HepG2 (cell line): ENCODE measurements at regions of chr5 and their contacts with region 1.

Region 1: DNA sequence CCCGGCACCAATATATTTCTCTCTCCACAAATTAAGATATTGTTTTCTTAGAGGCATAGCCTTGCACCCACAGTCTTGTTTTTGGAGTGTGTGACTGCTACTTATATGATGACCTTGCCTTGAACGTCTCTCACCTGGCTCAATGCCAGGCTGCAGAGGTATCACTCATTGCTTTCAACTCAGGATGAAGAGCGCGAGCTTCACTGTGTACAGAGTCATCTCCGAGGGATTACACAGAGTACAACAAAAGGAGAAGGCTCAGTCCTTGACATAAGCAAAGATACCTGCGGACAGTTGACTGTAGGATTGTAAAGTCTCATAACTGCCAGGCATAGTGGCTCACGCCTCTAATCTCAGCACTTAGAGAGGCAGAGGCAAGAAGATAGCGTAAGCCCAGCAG is 53.8 kb downstream of the CD180 start:
- DNase-seq: peak; percentile 65
- ATAC-seq: peak; percentile 52
- H3K4me3 ChIP-seq: no peak overlapping the region
- H3K27ac ChIP-seq: peak overlapping the region; percentile 86
- H3K4me1 ChIP-seq: peaks cover 64% of the 10 kb centered on the region
- H3K27me3 ChIP-seq: no peaks in the 10 kb centered on the region
- CTCF ChIP-seq: no peak
- EP300 ChIP-seq: 0 out of 4 replicates have a peak, but pooled peaks of 1 of the 2 experiments have one; percentile 10
- POLR2A ChIP-seq: no peak
- RAD21 ChIP-seq: no peak

Region 2: GRCh38 chr5:67003935-67004729 is 138.7 kb before region 1 on chr5:
- CTCF ChIA-PET with region 1: no interaction called
- POLR2A ChIA-PET with region 1: interaction called, 9 read pairs
- in situ Hi-C with region 1: loop called (anchors 5 kb)
- intact Hi-C with region 1: loop called (anchors 5 kb)
- DNase-seq: peak; percentile 96
- ATAC-seq: peak; percentile 91
- H3K4me3 ChIP-seq: peak overlapping the region; percentile 65 to 74 (median 73)
- H3K27ac ChIP-seq: peak overlapping the region; percentile 64
- H3K4me1 ChIP-seq: peaks cover 62% of the 10 kb centered on the region
- H3K27me3 ChIP-seq: no peaks in the 10 kb centered on the region
- CTCF ChIP-seq: no peak
- EP300 ChIP-seq: peak; percentile 16 to 31; a peak in 1 of 4 replicates
- POLR2A ChIP-seq: peak; percentile 61 to 85
- RAD21 ChIP-seq: no peak; the same call in 1 of the 2 replicates